ENCODE measurements at regions of chr11 and their contacts with region 1.

Region 1: GRCh38 chr11:19076744-19077589 is 16.4 kb upstream of the MRGPRX2 start:
- DNase-seq: peak; percentile 57
- H3K27ac ChIP-seq: no peak overlapping the region
- CTCF ChIP-seq: peak; percentile 97

Region 2: GRCh38 chr11:18958221-18958910 is 118.6 kb before region 1 on chr11:
- CTCF ChIA-PET with region 1: no interaction called
- POLR2A ChIA-PET with region 1: no interaction called
- DNase-seq: peak; percentile 34
- H3K27ac ChIP-seq: no peak overlapping the region
- CTCF ChIP-seq: no peak

Region 3: GRCh38 chr11:19110280-19110679 is 33.3 kb after region 1 on chr11:
- CTCF ChIA-PET with region 1: interaction called, 22 read pairs
- POLR2A ChIA-PET with region 1: no interaction called
- DNase-seq: no peak
- H3K27ac ChIP-seq: no peak overlapping the region
- CTCF ChIP-seq: no peak

Region 4: GRCh38 chr11:19193916-19194315 is 116.9 kb after region 1 on chr11:
- CTCF ChIA-PET with region 1: no interaction called
- POLR2A ChIA-PET with region 1: no interaction called
- DNase-seq: no peak
- H3K27ac ChIP-seq: no peak overlapping the region
- CTCF ChIP-seq: no peak

Region 5: GRCh38 chr11:19290356-19290755 is 213.4 kb after region 1 on chr11:
- CTCF ChIA-PET with region 1: no interaction called
- POLR2A ChIA-PET with region 1: no interaction called
- DNase-seq: no peak
- H3K27ac ChIP-seq: no peak overlapping the region
- CTCF ChIP-seq: no peak

Measured in RWPE1 (cell line).